ENCODE measurements at regions of chr17 and their contacts with region 1.

Region 1: GRCh38 chr17:5592382-5592781 is 8.1 kb upstream of the NLRP1 start:
- DNase-seq: peak in 1 of 4 experiments; percentile 17
- ATAC-seq: peak; percentile 59
- H3K4me3 ChIP-seq: no peak overlapping the region
- H3K27ac ChIP-seq: no peak overlapping the region
- H3K4me1 ChIP-seq: no peaks in the 10 kb centered on the region
- H3K27me3 ChIP-seq: no peaks in the 10 kb centered on the region
- CTCF ChIP-seq: peak in 2 of 3 experiments; percentile 40 to 51; a peak in 4 of 6 replicates
- EP300 ChIP-seq: no peak
- POLR2A ChIP-seq: no peak
- RAD21 ChIP-seq: peak in 1 of 2 experiments; percentile 40; a peak in 2 of 4 replicates

Region 2: GRCh38 chr17:5226940-5227878 is 365.2 kb before region 1 on chr17:
- CTCF ChIA-PET with region 1: no interaction called
- POLR2A ChIA-PET with region 1: no interaction called
- in situ Hi-C with region 1: no loop called
- intact Hi-C with region 1: no loop called
- DNase-seq: no peak
- ATAC-seq: no peak
- H3K4me3 ChIP-seq: no peak overlapping the region
- H3K27ac ChIP-seq: no peak overlapping the region
- H3K4me1 ChIP-seq: no peaks in the 10 kb centered on the region; a peak in 1 of 5 replicates
- H3K27me3 ChIP-seq: peaks cover 0 to 11% of the 10 kb centered on the region in 2 experiments; a peak in 1 of 5 replicates
- CTCF ChIP-seq: no peak
- EP300 ChIP-seq: no peak
- POLR2A ChIP-seq: no peak
- RAD21 ChIP-seq: no peak

Region 3: DNA sequence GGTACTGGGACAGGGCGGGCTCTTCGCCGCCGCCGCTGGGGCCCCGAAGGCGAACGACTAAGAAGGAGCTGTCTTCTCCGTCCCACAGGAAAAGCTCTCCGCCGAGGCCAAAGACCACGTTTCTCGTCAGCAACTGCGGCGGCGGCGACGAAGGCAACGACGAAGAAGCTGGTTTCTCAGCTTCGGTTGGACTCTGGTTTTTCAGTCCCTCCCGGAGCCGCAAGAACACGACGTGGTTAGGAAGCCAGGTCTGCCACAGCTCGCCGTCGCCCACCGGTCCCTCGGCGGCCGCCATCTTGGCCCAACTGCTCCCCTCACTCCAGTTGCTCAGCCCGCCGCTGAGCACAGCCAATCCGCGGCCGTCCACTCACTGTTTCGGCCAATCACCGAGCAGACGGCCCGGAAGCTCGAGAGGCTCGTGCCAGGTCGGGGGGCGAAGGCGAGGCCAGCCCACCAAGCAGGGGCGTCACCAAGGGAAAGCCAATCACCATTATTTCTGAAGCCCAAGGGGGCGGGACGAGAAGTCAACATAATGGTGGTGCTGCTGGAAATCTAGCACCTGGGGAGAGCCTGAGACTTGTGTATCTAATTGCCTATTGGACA is 172.9 kb before region 1 on chr17 and contains the start of gene NUP88:
- CTCF ChIA-PET with region 1: no interaction called
- POLR2A ChIA-PET with region 1: no interaction called
- in situ Hi-C with region 1: no loop called
- intact Hi-C with region 1: no loop called
- DNase-seq: peak; percentile 93 to 96 (median 94)
- ATAC-seq: peak; percentile 97
- H3K4me3 ChIP-seq: peak within 1 kb of the TSS; percentile 92
- H3K27ac ChIP-seq: peak within 1 kb of the TSS; percentile 97
- H3K4me1 ChIP-seq: peaks cover 3 to 9% of the 10 kb centered on the region in 2 experiments; a peak in 3 of 5 replicates
- H3K27me3 ChIP-seq: no peaks in the 10 kb centered on the region
- CTCF ChIP-seq: no peak
- EP300 ChIP-seq: no peak
- POLR2A ChIP-seq: peak; percentile 90
- RAD21 ChIP-seq: no peak
- polyA plus RNA-seq, gene NUP88: 59.9 to 74.6 TPM

Region 4: DNA sequence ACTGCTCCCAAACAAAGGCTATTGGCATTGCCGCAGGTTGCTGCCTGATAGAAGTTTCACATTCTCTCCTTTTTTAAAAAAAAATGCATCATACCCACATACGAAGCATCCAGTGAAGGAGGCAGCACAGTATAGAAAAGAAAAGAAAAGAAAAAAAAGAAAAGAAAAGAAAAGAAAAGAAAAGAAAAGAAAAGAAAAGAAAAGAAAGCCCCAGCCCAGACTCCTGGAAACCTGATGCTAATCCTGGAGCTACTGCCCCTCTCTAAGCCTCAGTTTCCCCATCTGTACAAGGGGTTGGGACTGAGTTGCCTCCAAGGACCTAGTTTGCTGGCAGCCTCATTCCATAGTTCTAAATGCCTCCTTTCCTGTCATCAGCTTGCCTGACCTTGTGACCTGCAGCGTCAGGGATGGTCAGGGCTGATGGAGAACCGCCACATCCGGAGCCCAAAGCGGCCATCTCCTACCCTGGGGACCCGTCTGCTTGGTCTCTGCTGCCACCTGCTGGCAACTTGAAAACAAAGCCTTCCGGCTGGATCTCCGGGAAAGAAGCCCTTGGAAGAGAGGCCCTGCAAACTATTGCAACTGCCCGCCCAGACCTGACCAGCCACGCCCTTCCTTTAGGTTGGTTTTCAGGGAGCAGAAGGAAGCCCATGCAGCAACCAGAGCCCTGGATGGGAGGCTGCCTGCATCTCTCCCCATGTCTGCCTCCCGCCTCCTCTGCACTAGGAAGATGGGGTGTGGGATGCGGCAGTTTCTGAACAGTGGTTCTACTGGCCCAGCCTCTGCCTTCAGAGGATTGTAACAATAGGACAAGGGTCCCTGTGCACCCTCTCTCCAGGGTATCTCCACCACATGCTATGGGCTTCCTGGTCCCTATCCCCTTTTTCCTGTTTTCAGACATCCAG is 829.6 kb after region 1 on chr17:
- CTCF ChIA-PET with region 1: interaction called, 5 read pairs
- POLR2A ChIA-PET with region 1: no interaction called
- in situ Hi-C with region 1: loop called (anchors 5 kb)
- intact Hi-C with region 1: loop called (anchors 10 kb)
- DNase-seq: peak; percentile 83 to 88 (median 86)
- ATAC-seq: peak; percentile 96
- H3K4me3 ChIP-seq: no peak overlapping the region
- H3K27ac ChIP-seq: no peak overlapping the region
- H3K4me1 ChIP-seq: no peaks in the 10 kb centered on the region
- H3K27me3 ChIP-seq: peaks cover 2 to 37% of the 10 kb centered on the region in 2 experiments; a peak in 3 of 5 replicates
- CTCF ChIP-seq: peak; percentile 83 to 86 (median 84)
- EP300 ChIP-seq: no peak
- POLR2A ChIP-seq: no peak
- RAD21 ChIP-seq: peak; percentile 81 to 89

Measured in K562 (cell line).